ENCODE measurements at regions of chr2 and their contacts with region 1.

Region 1: GRCh38 chr2:15939854-15940660 is at the start of gene MYCN:
- DNase-seq: peak; percentile 61
- H3K4me3 Mint-ChIP-seq: peak within 1 kb of the TSS; percentile 33
- H3K27ac Mint-ChIP-seq: no peak within 1 kb of the TSS
- H3K4me1 Mint-ChIP-seq: peaks cover 20% of the 10 kb centered on the region
- H3K27me3 Mint-ChIP-seq: peaks cover 41% of the 10 kb centered on the region
- total RNA-seq, gene MYCN: 0.17 to 0.38 TPM

Region 2: DNA sequence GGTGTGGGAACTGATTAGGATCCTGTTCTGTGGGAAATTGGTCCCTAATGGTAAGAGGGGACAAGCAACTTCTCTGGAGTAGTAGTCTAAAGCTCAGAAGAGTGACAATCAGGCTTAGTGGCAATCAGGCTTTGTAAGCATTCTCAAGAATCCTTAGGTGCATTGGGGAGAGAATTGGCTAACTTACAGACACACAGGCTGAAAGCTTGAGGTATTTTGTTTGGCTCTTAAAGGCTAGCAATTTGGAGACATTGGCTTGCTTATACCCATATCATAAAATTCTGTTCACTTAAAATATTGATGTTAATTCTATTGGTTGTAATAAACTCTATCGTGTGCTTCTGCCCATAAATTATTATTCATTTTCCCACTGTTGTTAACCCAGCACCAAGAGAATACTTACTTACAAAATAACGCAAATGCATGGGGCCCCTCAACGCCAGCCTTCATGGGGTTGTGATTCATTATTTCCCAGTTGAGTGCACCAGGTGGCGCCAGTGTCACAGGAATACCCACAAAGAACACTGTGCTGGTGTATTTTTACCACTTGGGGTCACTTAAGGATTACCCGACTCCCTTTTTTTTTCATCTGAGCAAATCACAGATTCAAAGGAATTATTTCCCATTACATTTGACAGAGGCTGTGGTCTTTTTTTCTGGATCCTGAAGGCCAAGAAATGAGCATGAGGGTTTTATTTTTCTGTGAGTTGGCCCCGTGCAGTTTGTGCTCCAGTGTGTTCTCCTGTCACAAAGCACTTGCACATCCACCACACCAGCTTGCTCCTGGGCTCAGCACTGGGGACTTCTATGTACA is 302.9 kb before region 1 on chr2:
- CTCF ChIA-PET with region 1: interaction called, 3 read pairs
- POLR2A ChIA-PET with region 1: no interaction called
- intact Hi-C with region 1: loop called (anchors 10 kb)
- DNase-seq: peak; percentile 69
- H3K4me3 Mint-ChIP-seq: no peak overlapping the region
- H3K27ac Mint-ChIP-seq: no peak overlapping the region
- H3K4me1 Mint-ChIP-seq: no peaks in the 10 kb centered on the region
- H3K27me3 Mint-ChIP-seq: no peaks in the 10 kb centered on the region

Region 3: DNA sequence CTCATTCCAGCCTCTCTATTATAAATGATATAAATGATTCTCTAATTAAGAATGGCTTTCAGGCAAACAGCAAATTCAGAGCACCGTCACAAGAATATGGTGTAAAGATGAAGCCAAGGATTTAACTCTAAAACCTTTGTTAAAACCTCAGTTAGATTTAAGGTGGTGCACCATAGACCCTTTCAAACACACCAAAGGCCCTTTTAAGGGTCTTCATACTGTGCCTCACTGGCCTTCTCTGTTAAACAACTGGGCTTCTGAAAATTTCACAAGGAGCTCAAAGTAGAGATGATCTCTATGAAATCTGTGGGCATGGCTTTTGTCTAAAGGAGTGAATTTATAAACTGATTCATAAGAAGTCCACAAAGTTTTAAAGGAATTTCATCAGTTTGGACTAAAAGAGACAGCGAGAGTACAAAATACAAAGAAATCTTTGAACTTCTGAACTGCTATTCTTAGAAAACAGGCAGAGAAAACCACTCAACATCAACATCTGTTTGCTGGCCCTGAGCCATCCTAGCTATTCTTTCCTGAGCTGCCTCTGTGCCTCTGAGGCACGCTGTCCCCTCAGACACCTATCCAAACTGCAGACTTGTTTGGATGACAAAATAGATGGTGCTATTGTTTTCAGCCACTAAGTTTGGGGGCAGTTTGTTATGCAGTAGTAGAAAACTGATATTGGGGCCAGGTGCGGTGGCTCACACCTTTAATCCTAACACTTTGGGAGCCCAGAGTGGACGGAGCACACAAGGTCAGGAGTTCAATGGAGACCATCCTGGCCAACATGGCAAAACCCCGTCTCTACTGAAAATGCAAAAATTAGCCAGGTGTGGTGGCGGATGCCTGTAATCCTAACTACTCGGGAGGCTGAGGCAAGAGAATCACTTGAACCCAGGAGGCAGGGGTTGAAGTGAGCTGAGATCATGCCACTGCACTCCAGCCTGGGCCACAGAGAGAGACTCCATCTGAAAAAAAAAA is 72.6 kb before region 1 on chr2:
- CTCF ChIA-PET with region 1: no interaction called
- POLR2A ChIA-PET with region 1: no interaction called
- intact Hi-C with region 1: no loop called
- DNase-seq: no peak
- H3K4me3 Mint-ChIP-seq: no peak overlapping the region
- H3K27ac Mint-ChIP-seq: no peak overlapping the region
- H3K4me1 Mint-ChIP-seq: no peaks in the 10 kb centered on the region
- H3K27me3 Mint-ChIP-seq: peaks cover 2% of the 10 kb centered on the region

Region 4: DNA sequence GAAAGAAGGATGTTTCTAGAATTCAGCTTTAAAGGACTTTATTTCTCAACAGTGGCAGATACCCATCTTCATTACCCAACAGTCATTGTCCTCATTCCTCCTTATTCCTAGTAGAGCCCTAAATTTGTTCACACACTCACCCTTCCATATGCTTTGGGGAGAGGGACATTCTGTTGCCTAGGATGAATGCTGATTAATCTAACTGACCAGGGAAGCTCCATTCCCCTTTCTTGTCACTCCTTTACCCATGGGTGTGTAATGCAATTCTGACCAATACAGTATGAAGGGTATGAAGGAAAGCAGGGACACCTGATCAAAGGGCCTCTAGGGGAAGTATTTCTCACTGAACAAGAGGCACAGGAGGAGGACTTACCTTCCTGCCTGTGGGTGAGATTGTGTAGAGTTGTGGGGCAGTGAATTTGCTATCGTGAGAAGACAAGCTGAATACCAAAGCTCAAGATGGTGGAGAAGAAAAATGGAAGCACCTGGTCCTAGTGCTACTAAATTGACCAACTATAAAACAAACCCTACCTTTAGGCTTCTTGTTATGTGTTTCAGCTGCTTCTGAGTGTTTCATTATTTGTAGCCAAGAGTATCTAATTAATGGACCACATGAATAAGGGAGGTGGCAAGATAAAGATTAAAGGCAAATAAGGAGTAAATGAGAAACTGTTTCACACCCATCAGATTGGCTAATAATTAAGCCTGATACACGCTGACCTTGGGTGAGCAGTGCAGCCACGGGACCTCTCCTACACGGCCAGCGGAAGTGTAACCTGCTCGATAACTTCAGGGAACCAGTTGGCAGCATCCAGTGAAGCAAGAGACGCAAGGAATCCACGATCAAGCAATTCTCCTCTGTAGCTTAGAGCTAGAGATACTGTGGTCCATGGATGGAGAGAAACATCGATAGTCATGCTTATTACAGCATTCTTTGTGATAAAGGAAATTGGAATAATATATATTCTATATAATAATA is 202.6 kb after region 1 on chr2:
- CTCF ChIA-PET with region 1: interaction called, 3 read pairs
- POLR2A ChIA-PET with region 1: no interaction called
- intact Hi-C with region 1: loop called (anchors 5 kb)
- DNase-seq: peak; percentile 11
- H3K4me3 Mint-ChIP-seq: no peak overlapping the region
- H3K27ac Mint-ChIP-seq: no peak overlapping the region
- H3K4me1 Mint-ChIP-seq: no peaks in the 10 kb centered on the region
- H3K27me3 Mint-ChIP-seq: no peaks in the 10 kb centered on the region

Region 5: GRCh38 chr2:16281451-16282336 is 341.6 kb after region 1 on chr2:
- CTCF ChIA-PET with region 1: interaction called, 9 read pairs
- POLR2A ChIA-PET with region 1: no interaction called
- intact Hi-C with region 1: loop called (anchors 5 kb)
- DNase-seq: no peak
- H3K4me3 Mint-ChIP-seq: no peak overlapping the region
- H3K27ac Mint-ChIP-seq: no peak overlapping the region
- H3K4me1 Mint-ChIP-seq: no peaks in the 10 kb centered on the region
- H3K27me3 Mint-ChIP-seq: peaks cover 3% of the 10 kb centered on the region

Region 6: GRCh38 chr2:16608661-16609643 is 668.9 kb after region 1 on chr2:
- CTCF ChIA-PET with region 1: interaction called, 39 read pairs
- POLR2A ChIA-PET with region 1: no interaction called
- intact Hi-C with region 1: no loop called
- DNase-seq: peak; percentile 90
- H3K4me3 Mint-ChIP-seq: peak overlapping the region; percentile 69
- H3K27ac Mint-ChIP-seq: no peak overlapping the region
- H3K4me1 Mint-ChIP-seq: peaks cover 2% of the 10 kb centered on the region
- H3K27me3 Mint-ChIP-seq: peaks cover 8% of the 10 kb centered on the region

Measured in activated CD4-positive, alpha-beta memory T cell treated with anti-CD3 and anti-CD28 coated beads for 36 hours (primary cell).